ENCODE measurements at regions of chr1 and their contacts with region 1.

Region 1: DNA sequence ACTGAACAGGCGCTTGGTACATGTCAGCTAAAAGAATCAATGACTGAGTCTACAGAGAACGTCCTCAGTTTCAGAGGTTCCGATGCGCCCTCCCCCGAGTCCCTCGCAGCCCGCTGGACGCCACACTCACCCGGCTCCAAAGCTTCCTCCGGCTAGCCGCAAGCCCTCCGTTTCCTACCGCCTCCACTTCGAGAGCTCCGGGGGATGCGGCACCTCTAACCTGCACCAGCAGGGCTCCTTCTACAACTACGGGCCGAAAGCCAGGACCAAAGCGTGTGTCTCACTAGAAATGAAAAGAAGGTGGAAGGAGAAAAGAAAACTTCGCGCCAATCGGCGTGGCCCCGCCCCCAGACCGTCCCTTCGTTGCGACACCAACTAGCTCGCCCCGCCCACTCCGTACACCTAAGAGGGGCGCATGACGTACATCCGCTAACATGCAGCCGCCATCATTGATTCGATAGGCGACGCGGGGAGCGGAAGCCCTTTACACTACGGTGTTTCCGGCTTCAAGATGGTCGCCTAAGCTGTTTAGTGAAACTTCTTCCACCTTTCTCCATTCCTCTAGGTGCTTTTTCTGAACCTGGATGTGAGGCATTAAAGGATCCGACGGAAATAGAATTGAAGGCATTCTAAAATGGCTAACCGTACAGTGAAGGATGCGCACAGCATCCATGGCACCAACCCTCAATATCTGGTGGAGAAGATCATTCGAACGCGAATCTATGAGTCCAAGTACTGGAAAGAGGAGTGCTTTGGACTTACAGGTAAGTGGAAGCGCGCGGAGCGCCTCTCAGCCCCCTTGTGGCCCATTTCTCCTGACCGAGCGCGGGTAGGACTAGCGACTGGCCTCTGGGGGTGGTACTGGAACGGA is at the starts of genes ORC1 and PRPF38A:
- DNase-seq: peak; percentile 83
- ATAC-seq: peak; percentile 91
- H3K4me3 ChIP-seq: peak within 1 kb of the TSS; percentile 98
- H3K27ac ChIP-seq: peak within 1 kb of the TSS; percentile 98
- H3K4me1 ChIP-seq: no peaks in the 10 kb centered on the region
- H3K27me3 ChIP-seq: no peaks in the 10 kb centered on the region
- CTCF ChIP-seq: peak; percentile 50 to 57 (median 52)
- EP300 ChIP-seq: no peak
- POLR2A ChIP-seq: peak; percentile 88
- RAD21 ChIP-seq: peak; percentile 31; the same call in 1 of the 2 replicates
- polyA plus RNA-seq, gene ORC1: 7.7 to 10.3 TPM
- polyA plus RNA-seq, gene PRPF38A: 86.8 to 104 TPM

Region 2: GRCh38 chr1:52186449-52186848 is 217.9 kb before region 1 on chr1:
- CTCF ChIA-PET with region 1: no interaction called
- POLR2A ChIA-PET with region 1: no interaction called
- RAD21 ChIA-PET with region 1: no interaction called
- SMC1A ChIA-PET with region 1: no interaction called
- in situ Hi-C with region 1: no loop called
- intact Hi-C with region 1: no loop called
- DNase-seq: no peak
- ATAC-seq: no peak
- H3K4me3 ChIP-seq: no peak overlapping the region
- H3K27ac ChIP-seq: no peak overlapping the region
- H3K4me1 ChIP-seq: no peaks in the 10 kb centered on the region
- H3K27me3 ChIP-seq: no peaks in the 10 kb centered on the region
- CTCF ChIP-seq: no peak
- EP300 ChIP-seq: no peak
- POLR2A ChIP-seq: no peak
- RAD21 ChIP-seq: no peak

Region 3: DNA sequence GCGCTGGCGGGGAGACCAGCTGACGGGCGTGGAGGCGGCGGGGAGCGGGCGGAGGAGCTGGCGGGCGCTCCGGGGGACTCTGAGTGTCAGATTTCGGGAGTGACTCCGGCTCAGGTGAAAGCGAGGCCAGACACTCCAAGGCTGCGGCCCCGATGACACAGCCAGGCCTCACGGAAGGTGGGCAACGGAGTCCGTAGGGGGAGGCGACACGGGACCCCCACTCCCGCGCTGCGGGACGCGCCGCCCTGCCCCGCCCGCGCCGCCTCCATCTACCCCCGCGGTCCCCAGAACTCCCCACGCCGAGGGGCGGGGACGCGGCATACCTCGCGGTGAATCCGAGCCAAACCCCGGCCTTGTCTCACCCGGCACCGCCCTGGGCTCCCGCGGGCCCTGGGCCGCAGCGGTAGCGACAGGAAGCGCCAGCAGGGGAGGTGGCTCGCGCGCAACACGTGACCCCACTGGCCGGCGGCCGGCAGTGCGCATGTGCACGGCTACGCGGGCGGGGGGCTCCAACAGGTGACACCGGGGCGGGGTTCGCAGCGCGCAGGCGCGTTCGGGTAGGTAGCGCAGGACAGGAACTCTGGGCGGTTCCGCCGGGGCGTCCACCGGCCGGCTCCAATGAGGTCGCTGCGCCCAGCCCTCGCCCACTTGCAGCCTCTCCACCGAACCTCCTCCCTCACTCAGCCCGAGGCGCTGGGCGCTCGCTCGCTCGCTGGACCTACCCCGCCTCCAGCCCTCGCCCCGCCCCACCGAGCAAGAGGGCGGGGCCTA is 38.4 kb before region 1 on chr1 and contains the start of gene CC2D1B:
- CTCF ChIA-PET with region 1: interaction called, 9 read pairs
- POLR2A ChIA-PET with region 1: interaction called, 7 read pairs
- RAD21 ChIA-PET with region 1: interaction called, 12 read pairs
- SMC1A ChIA-PET with region 1: interaction called, 7 read pairs
- in situ Hi-C with region 1: no loop called
- intact Hi-C with region 1: loop called (anchors 1 kb)
- DNase-seq: peak; percentile 94
- ATAC-seq: peak; percentile 97
- H3K4me3 ChIP-seq: peak within 1 kb of the TSS; percentile 88
- H3K27ac ChIP-seq: peak within 1 kb of the TSS; percentile 84
- H3K4me1 ChIP-seq: peaks cover 4% of the 10 kb centered on the region
- H3K27me3 ChIP-seq: no peaks in the 10 kb centered on the region
- CTCF ChIP-seq: no peak; a peak in 1 of 6 replicates
- EP300 ChIP-seq: no peak
- POLR2A ChIP-seq: peak; percentile 99
- RAD21 ChIP-seq: no peak
- polyA plus RNA-seq, gene CC2D1B: 0.90 to 2.2 TPM

Region 4: DNA sequence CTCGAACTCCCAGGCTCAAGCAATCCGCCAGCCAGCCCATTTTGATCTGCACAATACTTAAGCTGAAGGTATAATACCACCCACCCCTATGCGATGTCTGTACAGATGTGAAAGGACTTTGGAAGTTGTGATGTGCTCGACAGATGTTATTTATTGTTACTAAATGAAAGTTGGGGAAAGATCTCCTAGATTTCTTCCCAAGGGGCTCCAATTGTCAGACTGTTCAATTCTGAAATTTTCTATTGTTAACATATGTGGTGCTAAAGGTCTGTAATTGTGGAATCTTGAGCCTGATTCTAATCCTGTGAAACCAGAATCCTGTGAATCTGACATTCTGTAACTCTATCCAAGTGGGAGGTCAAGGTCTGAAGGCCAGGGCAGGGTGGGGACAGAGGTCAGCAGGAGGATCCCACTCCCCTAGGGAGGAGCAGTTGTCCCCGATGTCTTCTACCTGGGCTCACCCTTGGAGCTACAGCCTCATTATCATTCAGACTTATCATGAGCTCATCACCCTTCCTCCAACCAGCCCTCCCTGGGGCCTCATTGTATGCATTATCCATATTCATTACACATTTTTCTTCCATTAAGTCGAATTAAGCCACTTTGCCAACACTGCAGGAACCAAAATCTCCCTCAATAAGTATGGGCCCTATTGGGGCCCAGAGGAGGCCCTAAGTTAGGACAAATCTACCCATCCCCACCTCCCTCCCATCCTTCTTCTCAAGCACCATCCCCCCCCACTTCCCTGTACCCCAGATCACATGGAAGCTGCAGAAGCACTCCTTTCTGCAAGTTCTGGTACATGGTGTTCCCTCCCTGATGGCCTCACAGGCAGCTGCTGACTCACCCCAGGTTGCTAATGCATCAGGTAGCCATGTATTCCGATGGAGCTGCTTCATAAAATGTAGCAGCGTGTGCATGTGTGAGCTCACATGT is 260.9 kb after region 1 on chr1:
- CTCF ChIA-PET with region 1: interaction called, 13 read pairs
- POLR2A ChIA-PET with region 1: interaction called, 4 read pairs
- RAD21 ChIA-PET with region 1: interaction called, 5 read pairs
- SMC1A ChIA-PET with region 1: interaction called, 24 read pairs
- in situ Hi-C with region 1: no loop called
- intact Hi-C with region 1: no loop called
- DNase-seq: no peak
- ATAC-seq: no peak
- H3K4me3 ChIP-seq: no peak overlapping the region
- H3K27ac ChIP-seq: no peak overlapping the region
- H3K4me1 ChIP-seq: no peaks in the 10 kb centered on the region
- H3K27me3 ChIP-seq: no peaks in the 10 kb centered on the region
- CTCF ChIP-seq: no peak
- EP300 ChIP-seq: no peak
- POLR2A ChIP-seq: no peak
- RAD21 ChIP-seq: no peak

Measured in GM12878 (cell line).